ENCODE measurements at regions of chr3 and their contacts with region 1.

Region 1: GRCh38 chr3:32655167-32655566 is 29.8 kb upstream of the CNOT10 start:
- DNase-seq: no peak
- ATAC-seq: no peak
- H3K4me3 ChIP-seq: no peak overlapping the region
- H3K27ac ChIP-seq: no peak overlapping the region
- H3K4me1 ChIP-seq: no peaks in the 10 kb centered on the region
- H3K27me3 ChIP-seq: peaks cover 0 to 4% (median 0%) of the 10 kb centered on the region in 7 donors
- CTCF ChIP-seq: no peak

Region 2: GRCh38 chr3:31567036-31567435 is 1088.1 kb before region 1 on chr3:
- intact Hi-C with region 1: no loop called
- DNase-seq: no peak
- ATAC-seq: peak in 5 of 8 donors; percentile 25 to 68 (median 53)
- H3K4me3 ChIP-seq: no peak overlapping the region
- H3K27ac ChIP-seq: no peak overlapping the region
- H3K4me1 ChIP-seq: peaks cover 0 to 76% (median 51%) of the 10 kb centered on the region in 9 donors
- H3K27me3 ChIP-seq: no peaks in the 10 kb centered on the region
- CTCF ChIP-seq: peak in 8 of 9 donors; percentile 8 to 60 (median 47)

Region 3: GRCh38 chr3:32557643-32558352 is 97.4 kb before region 1 on chr3:
- intact Hi-C with region 1: no loop called
- DNase-seq: no peak
- ATAC-seq: no peak
- H3K4me3 ChIP-seq: no peak overlapping the region
- H3K27ac ChIP-seq: no peak overlapping the region
- H3K4me1 ChIP-seq: peaks cover 0 to 57% (median 22%) of the 10 kb centered on the region in 9 donors
- H3K27me3 ChIP-seq: no peaks in the 10 kb centered on the region
- CTCF ChIP-seq: no peak

Region 4: DNA sequence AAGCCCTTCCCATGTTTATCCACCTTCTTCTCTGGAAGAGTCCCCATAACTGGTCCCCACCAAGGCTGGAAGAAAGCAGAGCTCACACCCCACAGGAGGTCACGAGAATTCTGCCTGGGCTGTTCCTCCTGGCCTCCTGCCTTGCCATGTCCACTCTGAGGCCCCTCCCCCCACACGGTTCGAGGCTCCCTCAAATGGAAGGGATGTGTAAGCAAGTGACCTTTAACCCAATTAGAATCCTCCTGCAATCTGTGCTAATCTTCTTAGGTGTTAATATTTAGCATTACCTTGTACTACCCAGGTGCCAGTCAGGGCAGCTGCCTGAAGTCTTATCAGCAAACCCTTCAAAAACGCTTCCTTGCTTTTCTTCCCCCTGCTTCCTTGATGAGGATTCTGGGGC is 52.1 kb before region 1 on chr3:
- intact Hi-C with region 1: loop called in 1 of 10 experiments (anchors 10 kb)
- DNase-seq: no peak
- ATAC-seq: no peak
- H3K4me3 ChIP-seq: no peak overlapping the region
- H3K27ac ChIP-seq: no peak overlapping the region
- H3K4me1 ChIP-seq: no peaks in the 10 kb centered on the region
- H3K27me3 ChIP-seq: no peaks in the 10 kb centered on the region
- CTCF ChIP-seq: no peak

Region 5: DNA sequence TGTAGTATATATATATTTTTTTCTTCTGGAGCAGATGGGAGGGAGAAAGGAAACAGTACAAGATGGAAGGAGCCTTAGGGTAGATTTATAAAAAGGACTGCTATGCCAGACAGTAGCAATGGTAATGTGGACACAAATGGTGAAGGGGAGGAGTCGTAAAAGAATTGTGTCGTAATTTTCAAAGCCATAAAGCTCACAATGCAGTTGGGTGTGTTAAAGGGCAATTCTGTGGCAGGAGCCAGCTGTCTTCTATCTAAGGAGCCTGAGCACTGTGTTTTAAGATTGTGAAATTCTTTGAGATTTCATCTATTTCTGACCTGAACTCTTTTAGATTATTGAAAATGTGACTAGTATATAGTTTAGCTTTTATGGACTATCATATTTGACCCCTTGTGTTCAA is 88.8 kb after region 1 on chr3:
- intact Hi-C with region 1: no loop called
- DNase-seq: no peak
- ATAC-seq: no peak
- H3K4me3 ChIP-seq: no peak overlapping the region
- H3K27ac ChIP-seq: no peak overlapping the region
- H3K4me1 ChIP-seq: no peaks in the 10 kb centered on the region
- H3K27me3 ChIP-seq: no peaks in the 10 kb centered on the region
- CTCF ChIP-seq: no peak